HCT116 (cell line): ENCODE measurements at regions of chr5 and their contacts with region 1.

Region 1: DNA sequence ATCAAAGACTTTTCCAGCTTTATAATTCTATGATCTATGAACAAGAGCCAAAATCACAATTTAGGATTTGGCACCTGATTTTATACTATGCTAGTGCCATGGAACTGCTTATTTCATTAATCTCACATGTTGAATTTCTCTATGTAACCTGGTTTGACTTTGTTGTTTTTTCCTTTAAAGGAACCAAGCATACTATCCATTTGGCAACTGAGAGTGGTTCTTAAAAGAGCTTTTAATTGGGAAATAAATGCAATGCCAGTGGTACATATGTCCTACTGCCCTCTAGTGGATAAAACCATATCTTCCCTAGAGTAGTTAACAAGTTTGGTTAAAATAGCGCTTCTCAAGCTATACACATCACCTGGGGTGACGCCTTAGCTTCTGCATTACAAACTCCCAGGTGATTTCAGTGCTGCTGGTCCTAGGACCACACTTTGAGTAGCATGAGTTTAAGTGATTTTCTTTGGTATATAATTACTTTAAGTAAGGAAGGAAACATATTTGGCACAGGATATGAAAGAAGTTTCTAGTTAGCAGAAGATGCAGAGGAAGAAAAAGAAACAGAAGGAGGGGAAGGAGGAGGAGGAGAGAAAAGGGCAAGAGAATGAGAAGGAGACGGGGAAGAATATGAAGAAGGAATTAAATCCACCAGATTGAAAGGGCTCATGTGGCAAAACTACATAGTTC is 56.8 kb downstream of the FGF10 start:
- DNase-seq: peak; percentile 39
- ATAC-seq: peak; percentile 74
- H3K4me3 ChIP-seq: no peak overlapping the region
- H3K27ac ChIP-seq: no peak overlapping the region
- H3K4me1 ChIP-seq: no peaks in the 10 kb centered on the region
- H3K27me3 ChIP-seq: no peaks in the 10 kb centered on the region
- CTCF ChIP-seq: peak; percentile 27 to 75 (median 60); a peak in 5 of 6 replicates
- POLR2A ChIP-seq: no peak
- RAD21 ChIP-seq: peak; percentile 55; the same call in 1 of the 2 replicates

Region 2: GRCh38 chr5:43729846-43730478 is 602.5 kb before region 1 on chr5:
- CTCF ChIA-PET with region 1: interaction called, 27 read pairs
- POLR2A ChIA-PET with region 1: no interaction called
- RAD21 ChIA-PET with region 1: interaction called in 1 of 2 experiments, 4 read pairs
- intact Hi-C with region 1: loop called (anchors 1 kb)
- DNase-seq: peak; percentile 7
- ATAC-seq: 0 out of 2 replicates have a peak, but pooled peaks have one; percentile 40
- H3K4me3 ChIP-seq: no peak overlapping the region
- H3K27ac ChIP-seq: no peak overlapping the region
- H3K4me1 ChIP-seq: no peaks in the 10 kb centered on the region
- H3K27me3 ChIP-seq: no peaks in the 10 kb centered on the region; the same call in 1 of the 2 replicates
- CTCF ChIP-seq: peak in 2 of 3 experiments; percentile 29 to 66; a peak in 3 of 6 replicates
- POLR2A ChIP-seq: no peak
- RAD21 ChIP-seq: peak; percentile 62

Region 3: DNA sequence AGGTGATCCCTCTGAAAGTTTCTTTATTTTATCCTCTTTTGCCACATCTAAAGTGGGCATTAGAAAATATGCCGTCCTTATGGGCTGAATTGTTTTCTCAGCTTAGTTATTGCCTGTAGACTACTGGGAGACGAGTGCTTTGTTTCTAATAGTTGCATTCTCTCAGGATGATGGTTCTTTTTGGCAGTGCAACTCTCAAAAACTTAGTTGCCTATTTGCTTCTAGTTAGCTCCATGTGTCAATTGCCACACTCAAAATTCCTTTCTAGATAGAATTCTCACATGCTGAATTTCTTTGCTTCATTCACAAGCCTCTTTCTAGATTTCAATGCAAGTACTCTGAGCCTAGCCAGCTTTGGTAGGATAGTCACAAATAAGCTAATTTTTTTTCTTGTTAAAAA is 98.7 kb before region 1 on chr5:
- CTCF ChIA-PET with region 1: no interaction called
- POLR2A ChIA-PET with region 1: no interaction called
- RAD21 ChIA-PET with region 1: no interaction called
- intact Hi-C with region 1: no loop called
- DNase-seq: no peak
- ATAC-seq: no peak
- H3K4me3 ChIP-seq: no peak overlapping the region
- H3K27ac ChIP-seq: no peak overlapping the region
- H3K4me1 ChIP-seq: no peaks in the 10 kb centered on the region
- H3K27me3 ChIP-seq: no peaks in the 10 kb centered on the region
- CTCF ChIP-seq: no peak
- POLR2A ChIP-seq: no peak
- RAD21 ChIP-seq: no peak

Region 4: DNA sequence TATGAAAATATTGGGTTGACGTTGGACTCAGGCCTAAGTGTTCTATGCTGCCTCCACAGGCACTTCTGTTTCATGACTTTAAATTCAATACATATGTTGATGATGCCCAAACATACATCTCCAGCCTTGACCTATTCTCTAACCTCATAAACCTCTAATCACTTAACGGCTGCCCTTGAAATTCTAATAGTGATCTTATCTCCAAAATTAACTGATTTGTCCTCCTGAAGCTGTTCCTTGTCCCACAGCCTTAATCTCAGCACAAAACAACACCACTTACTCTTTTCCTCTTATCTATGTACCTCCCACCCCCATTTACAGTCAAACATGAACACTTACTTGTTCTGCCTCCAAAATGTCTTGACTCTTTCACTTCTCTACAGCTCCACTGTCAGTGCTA is 13.4 kb after region 1 on chr5:
- CTCF ChIA-PET with region 1: interaction called, 15 read pairs
- POLR2A ChIA-PET with region 1: no interaction called
- RAD21 ChIA-PET with region 1: no interaction called
- intact Hi-C with region 1: no loop called
- DNase-seq: no peak
- ATAC-seq: no peak
- H3K4me3 ChIP-seq: no peak overlapping the region
- H3K27ac ChIP-seq: no peak overlapping the region
- H3K4me1 ChIP-seq: no peaks in the 10 kb centered on the region
- H3K27me3 ChIP-seq: no peaks in the 10 kb centered on the region
- CTCF ChIP-seq: no peak
- POLR2A ChIP-seq: no peak
- RAD21 ChIP-seq: no peak

Region 5: GRCh38 chr5:44546283-44546682 is 213.9 kb after region 1 on chr5:
- CTCF ChIA-PET with region 1: no interaction called
- POLR2A ChIA-PET with region 1: no interaction called
- RAD21 ChIA-PET with region 1: no interaction called
- intact Hi-C with region 1: no loop called
- DNase-seq: no peak
- ATAC-seq: no peak
- H3K4me3 ChIP-seq: no peak overlapping the region
- H3K27ac ChIP-seq: no peak overlapping the region
- H3K4me1 ChIP-seq: no peaks in the 10 kb centered on the region
- H3K27me3 ChIP-seq: no peaks in the 10 kb centered on the region
- CTCF ChIP-seq: no peak
- POLR2A ChIP-seq: no peak
- RAD21 ChIP-seq: no peak